Endothelial cell of umbilical vein (primary cell): ENCODE measurements at regions of chr1 and their contacts with region 1.

Region 1: GRCh38 chr1:109895720-109896504 is 14.7 kb upstream of the CSF1 start:
- DNase-seq: peak; percentile 85
- H3K4me3 ChIP-seq: no peak overlapping the region
- H3K27ac ChIP-seq: peak overlapping the region; percentile 71
- H3K4me1 ChIP-seq: peaks cover 43% of the 10 kb centered on the region
- H3K27me3 ChIP-seq: no peaks in the 10 kb centered on the region
- CTCF ChIP-seq: no peak
- POLR2A ChIP-seq: no peak

Region 2: DNA sequence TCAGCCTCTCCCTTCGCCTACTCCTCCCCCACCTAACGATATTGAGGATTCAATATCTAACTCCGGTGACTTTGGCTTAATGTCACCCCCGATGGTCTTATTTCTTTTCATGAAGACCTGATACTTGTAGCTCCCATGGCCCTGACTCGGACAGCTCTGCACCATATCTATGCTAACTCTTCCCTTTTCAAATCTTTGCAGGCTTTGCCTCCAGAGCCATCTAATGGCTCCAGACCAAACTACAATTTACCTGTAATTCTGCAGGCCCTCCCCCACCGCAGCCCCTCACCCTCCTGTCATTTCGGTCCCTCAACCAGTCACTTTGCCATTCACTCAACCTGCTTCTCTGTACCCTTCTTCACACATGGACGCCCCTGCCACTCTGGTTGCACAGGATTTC is 191.7 kb before region 1 on chr1:
- CTCF ChIA-PET with region 1: no interaction called
- POLR2A ChIA-PET with region 1: no interaction called
- dilution Hi-C with region 1: no loop called
- intact Hi-C with region 1: no loop called
- DNase-seq: peak; percentile 0
- H3K4me3 ChIP-seq: no peak overlapping the region
- H3K27ac ChIP-seq: no peak overlapping the region
- H3K4me1 ChIP-seq: no peaks in the 10 kb centered on the region
- H3K27me3 ChIP-seq: peaks cover 0 to 4% of the 10 kb centered on the region in 2 experiments
- CTCF ChIP-seq: no peak
- POLR2A ChIP-seq: no peak

Region 3: GRCh38 chr1:109850194-109850593 is 45.7 kb before region 1 on chr1:
- CTCF ChIA-PET with region 1: no interaction called
- POLR2A ChIA-PET with region 1: no interaction called
- dilution Hi-C with region 1: no loop called
- intact Hi-C with region 1: loop called (anchors 1 kb)
- DNase-seq: no peak
- H3K4me3 ChIP-seq: no peak overlapping the region
- H3K27ac ChIP-seq: no peak overlapping the region
- H3K4me1 ChIP-seq: peaks cover 12% of the 10 kb centered on the region
- H3K27me3 ChIP-seq: peaks cover 2 to 4% of the 10 kb centered on the region in 2 experiments
- CTCF ChIP-seq: no peak
- POLR2A ChIP-seq: no peak

Region 4: GRCh38 chr1:109877320-109877771 is 18.6 kb before region 1 on chr1:
- CTCF ChIA-PET with region 1: no interaction called
- POLR2A ChIA-PET with region 1: no interaction called
- dilution Hi-C with region 1: no loop called
- intact Hi-C with region 1: loop called (anchors 1 kb)
- DNase-seq: peak; percentile 56
- H3K4me3 ChIP-seq: no peak overlapping the region
- H3K27ac ChIP-seq: no peak overlapping the region
- H3K4me1 ChIP-seq: peaks cover 8% of the 10 kb centered on the region
- H3K27me3 ChIP-seq: peaks cover 7 to 15% of the 10 kb centered on the region in 2 experiments
- CTCF ChIP-seq: peak in 1 of 2 donors; percentile 25
- POLR2A ChIP-seq: no peak

Region 5: DNA sequence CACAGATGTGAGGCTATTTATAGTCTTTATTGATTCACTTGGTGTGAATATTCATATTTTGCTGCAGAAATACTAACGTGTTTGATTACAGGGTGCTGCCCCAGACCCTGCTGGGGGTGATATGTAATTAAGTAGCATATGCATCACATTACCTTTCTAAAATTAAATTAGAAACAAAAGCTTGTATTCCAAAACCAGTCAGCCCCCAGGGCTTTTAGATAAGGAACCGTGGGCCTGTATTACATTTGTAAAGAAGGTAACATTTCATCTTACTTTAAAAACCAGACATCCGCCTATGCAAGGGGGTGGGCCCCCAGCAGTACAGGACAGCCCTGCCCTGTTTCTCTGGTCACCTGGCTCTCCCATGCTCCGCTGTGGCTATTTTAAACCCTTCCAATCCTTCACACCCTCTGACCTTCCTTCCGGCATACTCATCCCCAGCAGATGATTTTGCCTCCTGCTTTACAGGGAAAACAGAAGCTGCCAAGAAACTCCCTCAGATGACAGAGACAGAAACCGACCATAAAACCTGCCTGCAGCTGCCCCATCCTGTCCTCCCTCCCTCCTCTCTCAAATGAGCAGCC is 292.2 kb after region 1 on chr1:
- CTCF ChIA-PET with region 1: no interaction called
- POLR2A ChIA-PET with region 1: no interaction called
- dilution Hi-C with region 1: no loop called
- intact Hi-C with region 1: no loop called
- DNase-seq: no peak
- H3K4me3 ChIP-seq: no peak overlapping the region
- H3K27ac ChIP-seq: no peak overlapping the region
- H3K4me1 ChIP-seq: no peaks in the 10 kb centered on the region
- H3K27me3 ChIP-seq: peaks cover 6 to 24% of the 10 kb centered on the region in 2 experiments
- CTCF ChIP-seq: no peak
- POLR2A ChIP-seq: no peak

Region 6: GRCh38 chr1:110262846-110263631 is 367.1 kb after region 1 on chr1:
- CTCF ChIA-PET with region 1: no interaction called
- POLR2A ChIA-PET with region 1: no interaction called
- dilution Hi-C with region 1: no loop called
- intact Hi-C with region 1: no loop called
- DNase-seq: no peak
- H3K4me3 ChIP-seq: no peak overlapping the region
- H3K27ac ChIP-seq: no peak overlapping the region
- H3K4me1 ChIP-seq: peaks cover 11% of the 10 kb centered on the region
- H3K27me3 ChIP-seq: no peaks in the 10 kb centered on the region
- CTCF ChIP-seq: no peak
- POLR2A ChIP-seq: no peak